ENCODE measurements at regions of chr16 and their contacts with region 1.

Region 1: GRCh38 chr16:20789130-20789529 is 17.1 kb downstream of the ERI2 start:
- H3K4me3 ChIP-seq: no peak overlapping the region
- H3K27ac ChIP-seq: no peak overlapping the region
- H3K4me1 ChIP-seq: no peaks in the 10 kb centered on the region
- CTCF ChIP-seq: no peak

Region 2: GRCh38 chr16:20763461-20764232 is 25.5 kb before region 1 on chr16 and contains the start of gene ACSM3:
- CTCF ChIA-PET with region 1: no interaction called
- POLR2A ChIA-PET with region 1: no interaction called
- H3K4me3 ChIP-seq: peak within 1 kb of the TSS; percentile 28
- H3K27ac ChIP-seq: no peak within 1 kb of the TSS
- H3K4me1 ChIP-seq: no peaks in the 10 kb centered on the region
- CTCF ChIP-seq: no peak

Region 3: GRCh38 chr16:20774703-20775362 is 14.3 kb before region 1 on chr16:
- CTCF ChIA-PET with region 1: interaction called, 15 read pairs
- POLR2A ChIA-PET with region 1: no interaction called
- H3K4me3 ChIP-seq: no peak overlapping the region
- H3K27ac ChIP-seq: no peak overlapping the region
- H3K4me1 ChIP-seq: no peaks in the 10 kb centered on the region
- CTCF ChIP-seq: peak; percentile 58; the same call in 1 of the 2 replicates

Region 4: GRCh38 chr16:20812510-20812909 is 23.4 kb after region 1 on chr16:
- CTCF ChIA-PET with region 1: no interaction called
- POLR2A ChIA-PET with region 1: interaction called, 11 read pairs
- H3K4me3 ChIP-seq: no peak overlapping the region
- H3K27ac ChIP-seq: no peak overlapping the region
- H3K4me1 ChIP-seq: no peaks in the 10 kb centered on the region
- CTCF ChIP-seq: no peak

Region 5: DNA sequence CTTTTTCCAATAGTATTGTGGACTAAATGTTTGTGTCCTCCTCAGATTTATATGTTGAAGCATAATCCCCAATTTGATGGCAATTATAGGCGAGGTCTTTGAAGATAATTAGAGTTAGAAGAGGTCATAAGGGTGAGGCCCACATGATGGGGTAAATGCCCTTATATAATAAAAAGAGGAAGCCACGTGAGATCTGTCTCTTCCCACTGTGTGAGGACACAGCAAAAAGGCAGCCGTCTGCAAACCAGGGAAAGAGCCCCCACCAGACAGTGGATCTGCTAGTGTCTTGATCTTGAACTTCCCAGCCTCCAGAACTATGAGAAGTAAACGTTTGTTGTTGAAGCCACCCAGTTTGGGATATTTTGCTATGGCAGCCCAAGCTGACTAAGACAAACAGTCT is 187.4 kb after region 1 on chr16:
- CTCF ChIA-PET with region 1: no interaction called
- POLR2A ChIA-PET with region 1: no interaction called
- H3K4me3 ChIP-seq: no peak overlapping the region
- H3K27ac ChIP-seq: no peak overlapping the region
- H3K4me1 ChIP-seq: no peaks in the 10 kb centered on the region
- CTCF ChIP-seq: no peak

Measured in HEK293 (cell line).